Activated CD8-positive, alpha-beta memory T cell treated with anti-CD3 and anti-CD28 coated beads, Interleukin-2, amount 10 ng/mL, durations not matched to agents 7 days and 5 days (primary cell): ENCODE measurements at regions of chr4 and their contacts with region 1.

Region 1: DNA sequence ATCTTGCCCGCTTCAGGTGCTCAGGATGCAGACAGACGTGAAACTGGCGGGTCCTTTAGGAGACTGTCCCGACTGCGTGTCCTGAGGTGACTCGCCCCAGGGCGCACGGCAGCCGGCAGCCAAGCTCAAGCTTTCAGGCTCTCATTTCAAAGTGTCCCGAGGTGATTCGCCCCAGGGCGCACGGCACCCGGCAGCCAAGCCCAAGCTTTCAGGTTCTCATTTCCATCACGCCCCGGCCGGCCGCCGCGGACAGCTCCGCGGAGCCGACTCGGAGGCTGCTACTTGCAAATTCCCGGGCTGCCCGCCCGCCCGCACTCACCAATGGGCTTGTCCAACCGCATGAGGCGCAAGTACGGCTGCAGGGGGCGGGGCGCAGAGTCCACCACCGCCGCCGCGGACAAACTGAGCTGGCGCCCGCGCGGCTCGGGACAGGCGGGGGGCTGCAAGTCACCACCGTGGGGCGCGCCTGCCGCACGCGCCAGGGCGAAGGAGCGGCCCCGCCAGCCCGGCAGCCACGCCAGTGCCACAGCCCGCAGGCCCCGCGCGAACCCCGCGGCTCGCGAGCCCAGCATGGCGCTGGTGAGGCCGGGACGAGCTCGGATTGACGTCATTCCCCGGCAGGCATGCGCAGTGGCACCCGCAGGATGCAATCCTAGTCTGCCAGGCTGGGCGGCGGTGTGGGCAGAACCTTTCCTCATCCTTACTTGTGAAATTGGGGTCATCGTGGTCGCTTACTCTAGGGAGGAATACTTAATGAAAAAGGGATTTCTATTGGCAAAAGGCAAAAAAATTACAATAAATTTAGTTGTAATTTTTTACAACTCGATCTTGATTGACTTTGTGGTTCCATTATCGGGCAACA is at the start of gene COQ2:
- DNase-seq: peak; percentile 97
- ATAC-seq: peak; percentile 94
- H3K4me3 Mint-ChIP-seq: peak within 1 kb of the TSS; percentile 86
- H3K27ac Mint-ChIP-seq: peak within 1 kb of the TSS; percentile 99
- H3K4me1 Mint-ChIP-seq: peaks cover 46% of the 10 kb centered on the region
- H3K27me3 Mint-ChIP-seq: no peaks in the 10 kb centered on the region
- total RNA-seq, gene COQ2: 20.6 to 21.9 TPM

Region 2: GRCh38 chr4:83074086-83074704 is 210.2 kb before region 1 on chr4:
- CTCF ChIA-PET with region 1: interaction called, 35 read pairs
- DNase-seq: peak; percentile 76
- ATAC-seq: peak; percentile 91
- H3K4me3 Mint-ChIP-seq: no peak overlapping the region
- H3K27ac Mint-ChIP-seq: peak overlapping the region; percentile 52
- H3K4me1 Mint-ChIP-seq: peaks cover 25% of the 10 kb centered on the region
- H3K27me3 Mint-ChIP-seq: no peaks in the 10 kb centered on the region

Region 3: DNA sequence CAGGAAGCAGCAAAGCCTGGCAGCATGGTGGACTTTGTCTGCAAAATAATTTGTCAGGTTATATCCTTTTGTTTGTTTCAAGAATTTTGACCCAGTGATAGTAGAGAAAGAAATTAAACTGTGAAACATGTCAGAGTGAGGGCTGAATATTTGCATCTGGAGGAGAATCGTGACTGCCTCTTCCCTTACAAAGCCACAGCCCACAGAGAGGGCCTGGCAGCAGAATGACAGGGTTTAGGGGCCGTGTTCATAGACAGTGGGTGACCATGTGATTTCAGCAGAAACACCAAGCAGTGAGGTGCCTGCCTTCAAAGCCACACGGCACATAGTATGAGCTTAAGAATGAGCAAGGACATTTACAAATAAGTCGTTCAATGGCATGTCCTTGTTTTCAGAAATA is 145.5 kb before region 1 on chr4:
- CTCF ChIA-PET with region 1: no interaction called
- DNase-seq: peak; percentile 86
- ATAC-seq: peak; percentile 99
- H3K4me3 Mint-ChIP-seq: no peak overlapping the region
- H3K27ac Mint-ChIP-seq: peak overlapping the region; percentile 84
- H3K4me1 Mint-ChIP-seq: peaks cover 26% of the 10 kb centered on the region
- H3K27me3 Mint-ChIP-seq: no peaks in the 10 kb centered on the region

Region 4: GRCh38 chr4:83252782-83253405 is 31.5 kb before region 1 on chr4:
- CTCF ChIA-PET with region 1: interaction called, 10 read pairs
- DNase-seq: peak; percentile 85
- ATAC-seq: peak; percentile 89
- H3K4me3 Mint-ChIP-seq: no peak overlapping the region
- H3K27ac Mint-ChIP-seq: no peak overlapping the region
- H3K4me1 Mint-ChIP-seq: peaks cover 14% of the 10 kb centered on the region
- H3K27me3 Mint-ChIP-seq: peaks cover 5% of the 10 kb centered on the region

Region 5: GRCh38 chr4:83272900-83273299 is 11.5 kb before region 1 on chr4:
- CTCF ChIA-PET with region 1: interaction called, 105 read pairs
- DNase-seq: no peak
- ATAC-seq: peak; percentile 54
- H3K4me3 Mint-ChIP-seq: peak overlapping the region; percentile 3
- H3K27ac Mint-ChIP-seq: peak overlapping the region; percentile 3
- H3K4me1 Mint-ChIP-seq: peaks cover 42% of the 10 kb centered on the region
- H3K27me3 Mint-ChIP-seq: no peaks in the 10 kb centered on the region

Region 6: DNA sequence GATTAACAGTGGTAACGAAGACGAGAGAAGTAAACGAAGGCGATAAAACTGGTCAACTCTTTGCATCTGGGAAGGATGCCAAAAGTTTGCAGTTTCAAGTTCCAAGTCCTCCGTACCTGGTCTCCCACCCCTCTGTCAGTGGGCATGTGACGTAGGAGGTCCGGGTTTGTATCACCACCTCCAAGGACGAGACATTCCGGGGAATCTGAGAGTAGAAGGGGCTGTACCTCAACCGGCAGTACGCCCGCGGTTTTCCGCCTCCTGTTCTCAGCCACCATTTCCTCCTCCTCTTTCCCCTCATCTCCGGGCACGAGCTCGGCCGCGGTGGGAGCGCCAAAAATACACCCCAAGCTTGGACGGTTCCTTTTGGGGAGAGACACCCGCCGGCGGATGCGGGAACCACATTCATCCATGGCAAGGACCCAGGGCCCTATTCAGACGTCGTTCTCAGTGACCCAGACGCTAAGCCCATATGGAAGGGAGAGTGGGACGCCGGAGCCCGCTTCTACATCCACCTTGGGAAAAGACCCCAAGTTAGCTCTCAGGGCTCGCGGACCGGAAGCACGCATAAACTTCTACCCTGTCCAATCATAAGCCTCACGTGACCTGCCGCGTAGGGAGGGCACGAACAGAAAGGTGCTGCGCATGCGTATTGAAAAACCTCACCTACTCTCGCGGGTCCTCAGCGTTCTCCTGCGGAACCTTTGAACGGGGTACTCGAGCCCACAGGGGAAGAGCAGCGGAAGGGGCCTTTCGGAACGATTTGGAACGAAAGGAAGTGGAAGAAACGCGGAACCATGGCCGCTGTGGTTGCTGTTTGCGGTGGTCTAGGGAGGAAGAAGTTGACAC is 171.1 kb after region 1 on chr4 and contains the starts of genes HELQ and MRPS18C:
- CTCF ChIA-PET with region 1: interaction called, 16 read pairs
- DNase-seq: peak; percentile 99
- ATAC-seq: peak; percentile 93
- H3K4me3 Mint-ChIP-seq: peak within 1 kb of the TSS; percentile 98
- H3K27ac Mint-ChIP-seq: peak within 1 kb of the TSS; percentile 100
- H3K4me1 Mint-ChIP-seq: peaks cover 43% of the 10 kb centered on the region
- H3K27me3 Mint-ChIP-seq: no peaks in the 10 kb centered on the region
- total RNA-seq, gene HELQ: 14.8 to 16.7 TPM
- total RNA-seq, gene MRPS18C: 53.9 to 64.4 TPM